Activated CD4-positive, alpha-beta memory T cell treated with anti-CD3 and anti-CD28 coated beads, Interleukin-2, amount 10 ng/mL, durations not matched to agents 7 days and 5 days (primary cell): ENCODE measurements at regions of chr14 and their contacts with region 1.

Region 1: DNA sequence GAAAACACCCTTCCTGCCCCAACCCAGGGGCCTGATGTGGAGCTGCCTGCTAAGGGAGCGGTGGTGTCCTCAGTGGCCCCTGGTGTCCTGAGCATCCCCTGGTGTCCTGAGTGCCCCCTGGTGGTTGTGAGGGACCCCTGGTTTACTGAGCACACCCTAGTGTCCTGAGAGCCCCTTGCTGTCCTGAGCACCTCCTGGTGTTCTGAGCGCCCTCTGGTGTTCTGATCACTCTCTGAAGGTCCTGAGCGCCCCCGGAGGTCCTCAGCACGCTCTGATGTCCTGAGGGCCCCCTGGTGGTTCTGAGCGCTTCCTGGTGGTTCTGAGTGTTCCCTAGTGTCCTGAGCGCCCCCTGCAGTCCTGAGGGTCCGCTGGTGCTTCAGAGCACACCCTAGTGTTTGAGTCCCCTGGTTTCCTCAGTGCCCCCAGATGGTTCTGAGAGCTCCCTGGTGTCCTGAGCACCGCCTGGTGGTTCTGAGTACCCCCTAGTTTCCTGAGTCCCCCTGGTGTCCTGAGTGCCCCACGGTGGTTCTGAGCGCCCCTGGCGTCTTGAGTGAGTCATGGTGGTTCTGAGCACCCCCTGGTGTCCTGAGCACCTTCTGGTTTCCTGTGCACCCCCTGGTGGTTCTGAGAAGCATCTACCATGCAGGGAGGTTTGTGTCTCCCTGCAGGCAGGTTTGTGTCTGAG is 1004.2 kb downstream of the TMEM121 start:
- DNase-seq: peak; percentile 43
- H3K4me3 Mint-ChIP-seq: no peak overlapping the region
- H3K27ac Mint-ChIP-seq: no peak overlapping the region
- H3K4me1 Mint-ChIP-seq: peaks cover 3% of the 10 kb centered on the region
- H3K27me3 Mint-ChIP-seq: peaks cover 41% of the 10 kb centered on the region

Region 2: DNA sequence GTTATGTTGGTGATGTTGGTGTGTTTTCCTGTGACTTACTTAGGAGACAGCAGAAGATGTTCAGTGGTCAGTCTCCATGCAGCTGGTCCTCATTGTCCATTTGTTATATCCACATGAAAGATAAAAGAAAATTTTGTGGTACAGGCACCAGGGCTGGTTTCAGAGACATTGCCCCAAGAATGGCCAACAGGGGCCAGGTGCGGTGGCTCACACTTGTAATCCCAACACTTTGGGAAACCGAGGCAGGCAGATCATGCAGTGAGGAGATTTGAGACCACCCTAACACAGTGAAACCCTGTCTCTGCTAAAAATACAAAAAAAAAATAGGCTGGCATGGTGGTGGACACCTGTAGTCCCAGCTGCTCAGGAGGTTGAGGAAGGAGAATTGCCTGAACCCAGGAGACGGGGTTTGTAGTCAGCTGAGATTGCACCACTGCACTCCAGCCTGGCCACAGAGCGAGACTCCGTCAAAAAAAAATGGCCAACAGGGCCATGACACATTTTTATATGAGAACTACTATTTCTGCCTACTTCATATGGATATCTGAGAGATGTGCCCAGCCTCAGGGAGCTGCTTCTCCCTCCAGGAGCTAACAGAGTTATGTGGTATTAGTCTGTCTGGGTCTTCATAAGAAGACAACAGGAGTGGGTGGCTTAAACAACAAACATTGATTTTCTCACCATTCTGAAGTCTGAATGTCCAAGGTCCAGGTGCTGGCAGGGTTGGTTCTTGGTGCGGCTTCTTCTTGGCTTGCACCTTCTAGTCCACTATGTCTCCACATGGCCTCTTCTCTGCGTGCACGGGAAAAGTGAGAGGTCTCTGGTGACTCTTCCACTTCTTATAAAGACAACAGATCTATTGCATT is 182.4 kb before region 1 on chr14:
- CTCF ChIA-PET with region 1: no interaction called
- POLR2A ChIA-PET with region 1: no interaction called
- DNase-seq: no peak
- H3K4me3 Mint-ChIP-seq: no peak overlapping the region
- H3K27ac Mint-ChIP-seq: no peak overlapping the region
- H3K4me1 Mint-ChIP-seq: peaks cover 1% of the 10 kb centered on the region
- H3K27me3 Mint-ChIP-seq: peaks cover 9% of the 10 kb centered on the region

Region 3: DNA sequence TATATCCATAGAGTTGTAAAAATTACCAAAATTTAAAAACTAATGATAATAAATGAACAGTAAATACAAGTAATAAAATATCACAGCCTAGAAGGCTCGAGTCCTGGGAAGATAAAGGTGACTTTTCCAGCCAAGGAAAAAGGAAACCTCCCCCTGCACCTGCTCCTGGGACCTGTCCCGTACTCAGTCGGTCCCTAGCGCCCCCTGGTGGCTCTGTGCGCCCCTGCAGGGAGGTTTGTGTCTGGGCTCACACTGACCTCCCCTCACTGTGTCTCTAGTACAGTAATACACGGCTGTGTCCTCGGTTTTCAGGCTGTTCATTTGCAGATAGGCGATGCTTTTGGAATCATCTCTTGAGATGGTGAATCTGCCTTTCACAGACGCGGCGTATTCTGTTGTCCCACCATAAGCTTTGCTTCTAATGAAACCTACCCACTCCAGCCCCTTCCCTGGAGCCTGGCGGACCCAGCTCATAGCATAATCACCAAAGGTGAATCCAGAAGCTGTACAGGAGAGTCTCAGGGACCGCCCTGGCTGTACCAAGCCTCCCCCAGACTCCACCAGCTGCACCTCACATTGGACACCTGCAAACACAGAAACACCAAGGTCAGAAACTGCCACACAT is 26.2 kb after region 1 on chr14:
- CTCF ChIA-PET with region 1: interaction called, 35 read pairs
- POLR2A ChIA-PET with region 1: no interaction called
- DNase-seq: peak; percentile 78
- H3K4me3 Mint-ChIP-seq: no peak overlapping the region
- H3K27ac Mint-ChIP-seq: no peak overlapping the region
- H3K4me1 Mint-ChIP-seq: no peaks in the 10 kb centered on the region
- H3K27me3 Mint-ChIP-seq: peaks cover 27% of the 10 kb centered on the region

Region 4: GRCh38 chr14:106681568-106681967 is 151.0 kb after region 1 on chr14:
- CTCF ChIA-PET with region 1: no interaction called
- POLR2A ChIA-PET with region 1: no interaction called
- DNase-seq: no peak
- H3K4me3 Mint-ChIP-seq: no peak overlapping the region
- H3K27ac Mint-ChIP-seq: no peak overlapping the region
- H3K4me1 Mint-ChIP-seq: no peaks in the 10 kb centered on the region
- H3K27me3 Mint-ChIP-seq: peaks cover 52% of the 10 kb centered on the region